ENCODE measurements at regions of chr3 and their contacts with region 1.

Region 1: GRCh38 chr3:50365080-50365841 is 5.9 kb upstream of the TMEM115 start:
- DNase-seq: peak; percentile 95 to 96
- ATAC-seq: peak; percentile 91

Region 2: DNA sequence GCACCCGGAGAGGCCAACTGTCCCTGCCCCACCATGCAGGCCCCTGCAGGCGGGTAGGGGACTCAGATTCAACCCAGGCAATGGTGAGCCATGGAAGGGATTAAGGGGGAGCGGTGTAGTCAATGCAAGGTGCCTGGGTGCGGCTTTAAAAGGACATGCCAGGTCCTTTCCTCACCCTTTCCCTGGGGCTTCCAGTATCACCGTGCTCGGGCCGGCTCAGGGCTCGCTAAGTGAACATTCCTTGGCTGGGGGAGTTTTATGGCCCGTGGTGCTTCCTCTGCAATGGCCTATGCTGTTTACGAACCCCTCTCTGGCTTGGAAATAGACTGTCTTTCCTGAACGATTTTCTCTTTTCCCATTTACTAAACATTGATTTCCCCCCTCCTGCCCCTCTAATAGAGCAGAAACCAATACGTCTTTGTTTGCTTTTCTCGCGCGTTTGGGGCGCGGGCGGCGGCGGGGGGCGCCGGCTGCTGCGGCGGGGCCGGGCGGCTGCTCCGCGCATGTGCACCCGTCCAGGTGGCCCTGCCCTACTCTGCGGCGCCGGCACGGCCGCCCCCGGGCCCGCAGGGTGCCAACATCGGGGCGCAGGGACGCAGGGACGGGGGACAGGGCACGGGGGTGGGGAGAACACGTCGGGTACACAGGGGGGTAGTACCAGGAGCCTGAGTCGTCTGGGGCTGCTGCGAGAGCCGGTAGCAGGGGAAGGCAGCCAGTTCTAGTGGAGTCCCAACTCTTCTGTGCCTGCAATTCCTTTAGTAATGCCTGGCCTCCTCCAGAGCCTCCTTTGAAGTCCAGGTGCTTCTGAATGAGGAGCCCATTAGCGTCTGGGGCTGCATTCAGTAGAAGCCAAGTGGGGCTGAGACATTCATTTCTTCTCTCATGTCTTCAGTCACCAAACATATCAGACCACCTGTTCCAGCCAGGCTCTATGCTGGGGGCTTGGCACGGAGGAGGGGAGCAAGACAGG is 165.0 kb after region 1 on chr3:
- intact Hi-C with region 1: loop called in 1 of 2 experiments (anchors 10 kb)
- DNase-seq: no peak
- ATAC-seq: no peak

Measured in left colon (tissue), 2 donors.